ENCODE measurements at regions of chr15 and their contacts with region 1.

Region 1: GRCh38 chr15:89129123-89129815 is 41.0 kb downstream of the ABHD2 start:
- DNase-seq: peak; percentile 14 to 75 (median 66)
- ATAC-seq: peak; percentile 73
- H3K4me3 ChIP-seq: no peak overlapping the region
- H3K4me3 Mint-ChIP-seq: no peak overlapping the region
- H3K27ac ChIP-seq: peak overlapping the region in 1 of 2 experiments; percentile 79
- H3K27ac Mint-ChIP-seq: no peak overlapping the region
- H3K4me1 ChIP-seq: peaks cover 9% of the 10 kb centered on the region
- H3K4me1 Mint-ChIP-seq: peaks cover 23% of the 10 kb centered on the region
- H3K27me3 ChIP-seq: no peaks in the 10 kb centered on the region
- H3K27me3 Mint-ChIP-seq: no peaks in the 10 kb centered on the region
- CTCF ChIP-seq: peak; percentile 75

Region 2: GRCh38 chr15:88890495-88890894 is 238.8 kb before region 1 on chr15:
- CTCF ChIA-PET with region 1: interaction called, 13 read pairs
- POLR2A ChIA-PET with region 1: no interaction called
- intact Hi-C with region 1: loop called (anchors 1 kb)
- DNase-seq: no peak
- ATAC-seq: no peak
- H3K4me3 ChIP-seq: no peak overlapping the region
- H3K4me3 Mint-ChIP-seq: no peak overlapping the region
- H3K27ac ChIP-seq: no peak overlapping the region
- H3K27ac Mint-ChIP-seq: no peak overlapping the region
- H3K4me1 ChIP-seq: peaks cover 9% of the 10 kb centered on the region
- H3K4me1 Mint-ChIP-seq: peaks cover 17% of the 10 kb centered on the region
- H3K27me3 ChIP-seq: peaks cover 0 to 5% of the 10 kb centered on the region in 2 experiments
- H3K27me3 Mint-ChIP-seq: no peaks in the 10 kb centered on the region
- CTCF ChIP-seq: no peak

Region 3: GRCh38 chr15:89034288-89034687 is 95.0 kb before region 1 on chr15:
- CTCF ChIA-PET with region 1: interaction called, 14 read pairs
- POLR2A ChIA-PET with region 1: no interaction called
- intact Hi-C with region 1: no loop called
- DNase-seq: peak in 1 of 9 experiments; percentile 23
- ATAC-seq: no peak
- H3K4me3 ChIP-seq: no peak overlapping the region
- H3K4me3 Mint-ChIP-seq: no peak overlapping the region
- H3K27ac ChIP-seq: no peak overlapping the region
- H3K27ac Mint-ChIP-seq: no peak overlapping the region
- H3K4me1 ChIP-seq: no peaks in the 10 kb centered on the region
- H3K4me1 Mint-ChIP-seq: no peaks in the 10 kb centered on the region
- H3K27me3 ChIP-seq: no peaks in the 10 kb centered on the region
- H3K27me3 Mint-ChIP-seq: peaks cover 10% of the 10 kb centered on the region
- CTCF ChIP-seq: no peak

Region 4: DNA sequence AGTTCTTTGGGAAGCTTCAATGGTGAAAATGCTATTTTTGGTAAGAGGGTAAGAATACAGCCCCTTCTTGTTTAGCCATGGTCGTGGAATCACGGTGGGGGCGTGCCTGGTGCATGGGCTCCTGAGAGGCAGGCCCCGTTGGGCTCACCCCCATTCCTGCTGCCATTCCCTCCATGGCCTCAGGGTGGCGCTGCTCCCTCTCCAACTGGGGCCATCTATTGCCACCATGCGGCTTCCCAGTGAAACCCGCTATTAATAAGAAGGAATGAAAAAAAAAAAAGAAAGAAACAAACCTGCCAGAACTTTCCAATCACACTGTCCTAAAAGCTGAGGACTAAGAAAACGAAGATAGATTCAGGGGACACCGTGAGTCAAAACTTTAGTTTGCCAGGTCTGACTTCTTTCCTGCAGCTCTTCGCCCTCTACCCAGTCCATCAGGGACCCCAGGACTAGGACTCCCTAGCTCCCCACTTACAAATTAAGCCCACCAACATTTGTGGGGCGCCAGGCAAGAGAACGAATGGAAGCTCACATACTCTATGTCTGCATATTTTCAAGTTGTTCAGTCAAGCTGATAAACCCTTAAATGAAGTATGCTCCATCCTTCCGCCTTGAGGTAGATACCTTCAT is 71.7 kb before region 1 on chr15:
- CTCF ChIA-PET with region 1: interaction called, 117 read pairs
- POLR2A ChIA-PET with region 1: interaction called, 3 read pairs
- intact Hi-C with region 1: loop called (anchors 1 kb)
- DNase-seq: peak; percentile 61 to 90 (median 82)
- ATAC-seq: peak; percentile 100
- H3K4me3 ChIP-seq: no peak overlapping the region
- H3K4me3 Mint-ChIP-seq: no peak overlapping the region
- H3K27ac ChIP-seq: no peak overlapping the region
- H3K27ac Mint-ChIP-seq: no peak overlapping the region
- H3K4me1 ChIP-seq: no peaks in the 10 kb centered on the region
- H3K4me1 Mint-ChIP-seq: peaks cover 2% of the 10 kb centered on the region
- H3K27me3 ChIP-seq: no peaks in the 10 kb centered on the region
- H3K27me3 Mint-ChIP-seq: no peaks in the 10 kb centered on the region
- CTCF ChIP-seq: peak; percentile 99

Region 5: GRCh38 chr15:89096664-89097063 is 32.6 kb before region 1 on chr15:
- CTCF ChIA-PET with region 1: interaction called, 49 read pairs
- POLR2A ChIA-PET with region 1: no interaction called
- intact Hi-C with region 1: loop called in 1 of 2 experiments (anchors 2 kb)
- DNase-seq: no peak
- ATAC-seq: no peak
- H3K4me3 ChIP-seq: no peak overlapping the region
- H3K4me3 Mint-ChIP-seq: no peak overlapping the region
- H3K27ac ChIP-seq: no peak overlapping the region
- H3K27ac Mint-ChIP-seq: no peak overlapping the region
- H3K4me1 ChIP-seq: peaks cover 9% of the 10 kb centered on the region
- H3K4me1 Mint-ChIP-seq: peaks cover 29% of the 10 kb centered on the region
- H3K27me3 ChIP-seq: no peaks in the 10 kb centered on the region
- H3K27me3 Mint-ChIP-seq: no peaks in the 10 kb centered on the region
- CTCF ChIP-seq: no peak

Region 6: GRCh38 chr15:89139400-89140166 is 10.3 kb after region 1 on chr15:
- CTCF ChIA-PET with region 1: interaction called, 12 read pairs
- POLR2A ChIA-PET with region 1: interaction called, 4 read pairs
- intact Hi-C with region 1: no loop called
- DNase-seq: no peak
- ATAC-seq: no peak
- H3K4me3 ChIP-seq: no peak overlapping the region
- H3K4me3 Mint-ChIP-seq: no peak overlapping the region
- H3K27ac ChIP-seq: peak overlapping the region in 1 of 2 experiments; percentile 56
- H3K27ac Mint-ChIP-seq: no peak overlapping the region
- H3K4me1 ChIP-seq: peaks cover 11% of the 10 kb centered on the region
- H3K4me1 Mint-ChIP-seq: peaks cover 25% of the 10 kb centered on the region
- H3K27me3 ChIP-seq: no peaks in the 10 kb centered on the region
- H3K27me3 Mint-ChIP-seq: no peaks in the 10 kb centered on the region
- CTCF ChIP-seq: no peak

Region 7: GRCh38 chr15:89317186-89317720 is 188.0 kb after region 1 on chr15:
- CTCF ChIA-PET with region 1: no interaction called
- POLR2A ChIA-PET with region 1: no interaction called
- intact Hi-C with region 1: no loop called
- DNase-seq: no peak
- ATAC-seq: no peak
- H3K4me3 ChIP-seq: no peak overlapping the region
- H3K4me3 Mint-ChIP-seq: no peak overlapping the region
- H3K27ac ChIP-seq: no peak overlapping the region
- H3K27ac Mint-ChIP-seq: peak overlapping the region; percentile 64
- H3K4me1 ChIP-seq: no peaks in the 10 kb centered on the region
- H3K4me1 Mint-ChIP-seq: peaks cover 11% of the 10 kb centered on the region
- H3K27me3 ChIP-seq: no peaks in the 10 kb centered on the region
- H3K27me3 Mint-ChIP-seq: no peaks in the 10 kb centered on the region
- CTCF ChIP-seq: no peak